ENCODE measurements at regions of chr1 and their contacts with region 1.

Region 1: DNA sequence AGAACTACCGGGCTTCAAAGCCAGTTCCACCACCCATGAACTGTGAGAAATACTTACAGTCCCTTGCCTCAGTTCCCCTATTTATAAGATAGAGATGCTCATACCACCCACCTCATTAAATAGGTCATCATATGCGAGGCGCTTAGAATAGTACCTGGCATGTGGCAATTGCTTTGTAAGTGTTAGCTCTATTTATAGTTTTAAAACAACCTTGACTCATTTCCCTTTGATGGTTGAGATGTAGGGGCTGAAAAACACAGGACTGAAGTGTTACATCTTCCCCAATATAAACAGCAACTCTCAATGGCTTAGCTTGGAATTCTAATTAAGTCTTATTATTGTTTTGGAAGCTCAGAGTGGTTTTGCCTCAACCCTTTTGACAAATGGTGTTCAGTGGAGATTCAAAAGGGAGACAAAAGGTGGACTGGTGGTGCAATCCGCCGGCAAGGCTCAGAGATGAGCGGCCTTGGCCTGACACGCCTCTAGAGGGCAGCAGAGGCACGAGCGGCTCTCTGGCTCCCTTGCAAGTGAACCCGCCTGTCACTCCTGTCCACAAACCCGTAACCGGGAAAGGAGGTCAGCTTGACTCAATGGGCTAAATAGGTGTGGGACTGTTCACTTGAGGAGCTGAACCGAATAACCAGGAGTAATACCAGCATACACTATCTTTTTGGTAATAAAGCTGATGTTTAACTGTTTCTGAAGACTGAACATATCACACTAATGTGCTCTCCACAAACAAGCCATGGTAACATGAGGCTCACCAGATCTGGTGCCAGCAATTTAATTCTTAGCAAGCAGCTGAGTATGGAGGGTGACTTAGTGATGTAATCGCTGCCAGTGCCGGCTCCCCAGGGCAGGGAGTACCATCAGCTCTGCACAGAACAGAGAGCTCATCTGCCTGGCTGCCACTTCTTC is 19.5 kb upstream of the SMYD2 start:
- DNase-seq: peak; percentile 27
- H3K4me3 ChIP-seq: no peak overlapping the region; the same call in 1 of the 2 replicates
- H3K27ac ChIP-seq: no peak overlapping the region
- H3K27me3 ChIP-seq: peaks cover 5% of the 10 kb centered on the region
- CTCF ChIP-seq: peak; percentile 99

Region 2: GRCh38 chr1:213303286-213303685 is 958.2 kb before region 1 on chr1:
- CTCF ChIA-PET with region 1: no interaction called
- POLR2A ChIA-PET with region 1: no interaction called
- DNase-seq: no peak
- H3K4me3 ChIP-seq: no peak overlapping the region
- H3K27ac ChIP-seq: no peak overlapping the region
- H3K27me3 ChIP-seq: no peaks in the 10 kb centered on the region
- CTCF ChIP-seq: no peak

Region 3: DNA sequence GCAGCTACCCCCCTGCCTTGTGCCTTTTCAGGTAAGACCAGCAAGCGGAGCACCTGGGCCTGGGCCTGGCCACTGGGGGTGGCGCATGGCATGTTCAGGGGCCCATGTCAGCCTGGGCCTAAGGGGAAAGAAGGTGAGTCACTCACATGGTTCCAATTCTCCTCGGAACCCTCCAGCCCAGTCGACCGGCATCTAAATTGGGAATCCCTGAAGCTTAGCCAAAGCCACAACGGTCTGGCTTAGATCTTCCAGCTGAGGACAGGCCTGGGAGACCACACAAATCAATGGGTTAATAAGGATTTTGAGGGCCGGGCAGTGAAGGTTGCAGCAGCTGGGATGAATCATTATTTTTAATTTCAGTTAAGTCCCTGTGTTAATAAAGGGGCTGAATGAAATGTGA is 125.6 kb before region 1 on chr1:
- CTCF ChIA-PET with region 1: no interaction called
- POLR2A ChIA-PET with region 1: no interaction called
- DNase-seq: no peak
- H3K4me3 ChIP-seq: no peak overlapping the region
- H3K27ac ChIP-seq: no peak overlapping the region
- H3K27me3 ChIP-seq: peaks cover 4% of the 10 kb centered on the region
- CTCF ChIP-seq: no peak

Region 4: DNA sequence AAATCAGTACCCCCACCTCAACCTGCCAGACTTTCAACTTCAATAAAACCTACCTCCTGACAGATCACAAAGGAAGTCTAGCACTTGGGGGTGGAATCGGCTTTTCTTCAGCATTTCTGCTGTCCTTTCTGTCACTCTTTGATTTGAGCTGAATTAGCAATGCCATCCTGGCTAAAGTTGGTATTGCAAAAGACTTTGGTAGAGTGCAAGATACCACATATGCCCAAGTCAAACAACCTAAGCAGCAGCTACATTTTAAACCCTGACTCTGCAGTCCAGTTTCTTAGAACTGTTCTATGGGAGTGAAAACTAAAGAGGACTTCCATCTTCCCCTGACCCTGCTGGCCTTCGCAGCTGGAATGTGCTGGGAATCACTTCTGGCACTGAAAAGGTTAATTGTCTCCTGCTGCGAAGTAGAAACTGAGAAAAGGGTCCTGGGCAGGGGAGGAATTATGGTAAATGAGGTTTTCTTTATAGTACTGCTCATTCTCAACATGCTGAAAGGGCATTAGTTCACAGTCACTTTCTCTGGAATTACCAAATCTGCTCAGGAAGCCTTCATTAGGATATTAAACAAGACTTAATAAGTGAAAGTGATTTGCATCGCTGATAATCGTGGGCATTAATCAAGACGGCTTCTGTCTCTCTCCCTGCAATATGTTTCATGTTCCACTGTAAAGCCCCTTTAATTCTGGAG is 106.7 kb before region 1 on chr1:
- CTCF ChIA-PET with region 1: no interaction called
- POLR2A ChIA-PET with region 1: no interaction called
- DNase-seq: no peak
- H3K4me3 ChIP-seq: no peak overlapping the region
- H3K27ac ChIP-seq: no peak overlapping the region
- H3K27me3 ChIP-seq: peaks cover 13% of the 10 kb centered on the region
- CTCF ChIP-seq: no peak

Region 5: GRCh38 chr1:214205053-214205452 is 56.4 kb before region 1 on chr1:
- CTCF ChIA-PET with region 1: interaction called, 26 read pairs
- POLR2A ChIA-PET with region 1: no interaction called
- DNase-seq: no peak
- H3K4me3 ChIP-seq: no peak overlapping the region
- H3K27ac ChIP-seq: no peak overlapping the region
- H3K27me3 ChIP-seq: peaks cover 25% of the 10 kb centered on the region
- CTCF ChIP-seq: no peak

Region 6: GRCh38 chr1:214236477-214236876 is 25.0 kb before region 1 on chr1:
- CTCF ChIA-PET with region 1: interaction called, 46 read pairs
- POLR2A ChIA-PET with region 1: no interaction called
- DNase-seq: no peak
- H3K4me3 ChIP-seq: no peak overlapping the region
- H3K27ac ChIP-seq: no peak overlapping the region
- H3K27me3 ChIP-seq: peaks cover 7% of the 10 kb centered on the region
- CTCF ChIP-seq: no peak

Region 7: GRCh38 chr1:214289574-214290272 is 28.3 kb after region 1 on chr1:
- CTCF ChIA-PET with region 1: interaction called, 29 read pairs
- POLR2A ChIA-PET with region 1: no interaction called
- DNase-seq: no peak
- H3K4me3 ChIP-seq: no peak overlapping the region
- H3K27ac ChIP-seq: no peak overlapping the region
- H3K27me3 ChIP-seq: no peaks in the 10 kb centered on the region
- CTCF ChIP-seq: no peak

Region 8: DNA sequence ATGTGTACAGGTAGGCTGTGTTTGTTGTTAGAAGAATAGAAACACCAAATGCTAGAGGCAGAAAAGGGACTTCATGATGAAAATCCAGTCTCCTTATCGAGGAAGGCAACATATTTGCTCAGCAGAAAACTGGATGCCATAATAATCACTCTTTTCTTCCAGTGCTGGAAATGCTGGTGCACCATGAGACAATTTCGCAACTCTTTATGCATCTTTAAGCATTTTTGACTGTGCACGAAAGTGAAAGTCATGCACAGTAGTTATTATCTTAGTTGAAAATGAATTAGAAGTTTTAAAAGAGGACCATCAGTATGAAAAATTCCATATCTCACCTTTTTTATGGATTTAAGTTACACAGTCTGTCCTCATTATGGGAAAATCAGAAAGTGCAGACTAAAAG is 48.5 kb after region 1 on chr1:
- CTCF ChIA-PET with region 1: interaction called, 67 read pairs
- POLR2A ChIA-PET with region 1: no interaction called
- DNase-seq: no peak
- H3K4me3 ChIP-seq: no peak overlapping the region
- H3K27ac ChIP-seq: no peak overlapping the region
- H3K27me3 ChIP-seq: no peaks in the 10 kb centered on the region
- CTCF ChIP-seq: no peak

Region 9: DNA sequence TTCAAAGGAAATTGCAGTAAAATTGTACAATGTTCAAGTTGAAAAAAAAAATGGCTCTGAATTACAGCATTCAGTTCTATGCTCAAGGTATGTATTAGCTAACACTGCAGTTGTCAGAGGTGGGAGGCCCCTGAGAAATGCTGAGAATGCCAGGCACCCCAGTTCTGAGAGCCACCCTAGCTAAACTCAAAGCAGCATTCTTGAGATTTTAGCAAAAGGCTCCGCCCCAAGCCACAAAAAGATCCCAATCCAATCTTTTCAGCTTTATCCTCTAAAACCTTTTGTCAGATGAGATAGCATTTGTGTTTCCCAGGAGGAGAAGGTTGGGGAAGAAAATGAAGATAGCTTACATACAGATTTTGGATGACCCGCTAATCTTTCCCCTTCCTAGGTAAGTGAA is 88.3 kb after region 1 on chr1:
- CTCF ChIA-PET with region 1: interaction called, 17 read pairs
- POLR2A ChIA-PET with region 1: no interaction called
- DNase-seq: no peak
- H3K4me3 ChIP-seq: no peak overlapping the region
- H3K27ac ChIP-seq: peak overlapping the region; percentile 13
- H3K27me3 ChIP-seq: no peaks in the 10 kb centered on the region
- CTCF ChIP-seq: no peak

Region 10: GRCh38 chr1:214590696-214591095 is 329.2 kb after region 1 on chr1:
- CTCF ChIA-PET with region 1: interaction called, 29 read pairs
- POLR2A ChIA-PET with region 1: no interaction called
- DNase-seq: no peak
- H3K4me3 ChIP-seq: no peak overlapping the region
- H3K27ac ChIP-seq: no peak overlapping the region
- H3K27me3 ChIP-seq: no peaks in the 10 kb centered on the region
- CTCF ChIP-seq: no peak